GM12878 (cell line): ENCODE measurements at regions of chr6 and their contacts with region 1.

Region 1: GRCh38 chr6:126064748-126065401 is 78.5 kb downstream of the TRMT11 start:
- DNase-seq: no peak
- ATAC-seq: no peak
- H3K4me3 ChIP-seq: no peak overlapping the region
- H3K27ac ChIP-seq: no peak overlapping the region
- H3K4me1 ChIP-seq: no peaks in the 10 kb centered on the region
- H3K27me3 ChIP-seq: no peaks in the 10 kb centered on the region
- CTCF ChIP-seq: no peak
- EP300 ChIP-seq: no peak
- POLR2A ChIP-seq: no peak
- RAD21 ChIP-seq: no peak

Region 2: DNA sequence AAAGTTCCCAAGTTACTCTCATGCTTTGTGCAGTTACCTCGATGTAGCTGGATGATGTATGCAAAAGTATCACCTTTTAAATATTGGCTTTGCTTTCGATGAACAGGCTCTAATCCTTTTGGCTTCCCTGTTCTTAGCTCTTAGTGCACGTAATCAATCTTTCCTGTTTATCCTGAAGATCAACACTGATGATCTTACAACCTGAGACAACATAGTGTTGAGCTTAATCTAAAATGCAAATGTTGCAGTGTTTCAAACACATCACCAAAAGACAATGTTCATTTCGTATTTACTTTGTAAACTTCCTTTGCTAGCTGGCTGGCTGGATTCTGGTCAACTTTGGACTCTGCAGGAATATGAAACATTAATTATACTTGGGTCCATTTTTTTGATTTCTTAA is 1703.9 kb after region 1 on chr6:
- CTCF ChIA-PET with region 1: no interaction called
- POLR2A ChIA-PET with region 1: no interaction called
- RAD21 ChIA-PET with region 1: no interaction called
- SMC1A ChIA-PET with region 1: no interaction called
- in situ Hi-C with region 1: no loop called
- intact Hi-C with region 1: loop called (anchors 5 kb)
- DNase-seq: no peak
- ATAC-seq: no peak
- H3K4me3 ChIP-seq: no peak overlapping the region
- H3K27ac ChIP-seq: no peak overlapping the region
- H3K4me1 ChIP-seq: no peaks in the 10 kb centered on the region
- H3K27me3 ChIP-seq: no peaks in the 10 kb centered on the region
- CTCF ChIP-seq: no peak
- EP300 ChIP-seq: no peak
- POLR2A ChIP-seq: no peak
- RAD21 ChIP-seq: no peak